Activated CD4-positive, alpha-beta T cell treated with anti-CD3 and anti-CD28 coated beads, Interleukin-2, amount 10 ng/mL, durations not matched to agents 7 days and 5 days (primary cell): ENCODE measurements at regions of chr11 and their contacts with region 1.

Region 1: GRCh38 chr11:94750319-94751218 is 17.6 kb upstream of the AMOTL1 start:
- DNase-seq: no peak
- H3K4me3 Mint-ChIP-seq: no peak overlapping the region
- H3K27ac Mint-ChIP-seq: no peak overlapping the region
- H3K4me1 Mint-ChIP-seq: no peaks in the 10 kb centered on the region
- H3K27me3 Mint-ChIP-seq: peaks cover 54% of the 10 kb centered on the region

Region 2: GRCh38 chr11:93917673-93918072 is 832.9 kb before region 1 on chr11:
- CTCF ChIA-PET with region 1: no interaction called
- POLR2A ChIA-PET with region 1: interaction called, 14 read pairs
- DNase-seq: no peak
- H3K4me3 Mint-ChIP-seq: no peak overlapping the region
- H3K27ac Mint-ChIP-seq: no peak overlapping the region
- H3K4me1 Mint-ChIP-seq: no peaks in the 10 kb centered on the region
- H3K27me3 Mint-ChIP-seq: peaks cover 18% of the 10 kb centered on the region